ENCODE measurements at regions of chr16 and their contacts with region 1.

Region 1: DNA sequence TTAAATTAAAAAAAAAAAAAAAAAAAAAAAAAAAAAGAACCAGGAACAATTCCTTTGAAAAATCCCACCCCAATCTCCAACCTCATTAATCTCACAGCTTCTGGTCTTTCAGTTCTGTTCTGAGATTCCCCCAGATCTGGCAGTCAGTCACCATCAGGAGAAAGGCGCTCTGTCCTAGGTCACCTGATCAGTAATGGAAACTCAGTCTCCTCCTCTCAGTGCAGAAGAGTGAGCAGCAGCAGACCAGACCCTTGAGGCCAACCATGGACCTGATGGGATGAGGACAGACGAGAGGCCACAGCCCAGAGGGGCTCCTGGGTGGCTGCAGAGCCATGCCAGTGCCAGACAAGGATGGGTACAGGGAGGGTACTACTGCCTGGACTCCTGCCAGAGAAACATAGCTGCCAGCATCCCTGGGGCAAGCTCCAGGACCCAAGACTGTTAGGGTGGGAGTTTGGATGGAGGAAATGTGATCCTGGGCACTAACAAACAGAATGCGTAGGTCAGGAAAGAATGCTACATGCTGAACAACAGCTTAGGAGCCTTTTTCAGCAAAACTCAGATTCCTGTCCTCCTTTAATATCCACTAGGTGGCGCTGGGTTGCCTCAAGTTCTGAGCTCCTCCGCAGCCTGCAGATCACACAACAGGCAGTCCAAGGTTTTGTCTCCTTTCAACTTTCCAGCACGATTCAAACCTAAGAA is 28.7 kb downstream of the MPG start:
- DNase-seq: no peak

Region 2: GRCh38 chr16:180938-181667 is 74.3 kb after region 1 on chr16:
- intact Hi-C with region 1: loop called (anchors 1 kb)
- DNase-seq: peak; percentile 91

Region 3: GRCh38 chr16:228818-229730 is 122.3 kb after region 1 on chr16 and contains the start of gene LUC7L:
- intact Hi-C with region 1: no loop called
- DNase-seq: peak; percentile 95
- total RNA-seq, gene LUC7L: 30.9 TPM

Region 4: GRCh38 chr16:361872-362701 is 255.3 kb after region 1 on chr16:
- intact Hi-C with region 1: loop called (anchors 1 kb)
- DNase-seq: peak; percentile 90